A673 (cell line): ENCODE measurements at regions of chr2 and their contacts with region 1.

Region 1: DNA sequence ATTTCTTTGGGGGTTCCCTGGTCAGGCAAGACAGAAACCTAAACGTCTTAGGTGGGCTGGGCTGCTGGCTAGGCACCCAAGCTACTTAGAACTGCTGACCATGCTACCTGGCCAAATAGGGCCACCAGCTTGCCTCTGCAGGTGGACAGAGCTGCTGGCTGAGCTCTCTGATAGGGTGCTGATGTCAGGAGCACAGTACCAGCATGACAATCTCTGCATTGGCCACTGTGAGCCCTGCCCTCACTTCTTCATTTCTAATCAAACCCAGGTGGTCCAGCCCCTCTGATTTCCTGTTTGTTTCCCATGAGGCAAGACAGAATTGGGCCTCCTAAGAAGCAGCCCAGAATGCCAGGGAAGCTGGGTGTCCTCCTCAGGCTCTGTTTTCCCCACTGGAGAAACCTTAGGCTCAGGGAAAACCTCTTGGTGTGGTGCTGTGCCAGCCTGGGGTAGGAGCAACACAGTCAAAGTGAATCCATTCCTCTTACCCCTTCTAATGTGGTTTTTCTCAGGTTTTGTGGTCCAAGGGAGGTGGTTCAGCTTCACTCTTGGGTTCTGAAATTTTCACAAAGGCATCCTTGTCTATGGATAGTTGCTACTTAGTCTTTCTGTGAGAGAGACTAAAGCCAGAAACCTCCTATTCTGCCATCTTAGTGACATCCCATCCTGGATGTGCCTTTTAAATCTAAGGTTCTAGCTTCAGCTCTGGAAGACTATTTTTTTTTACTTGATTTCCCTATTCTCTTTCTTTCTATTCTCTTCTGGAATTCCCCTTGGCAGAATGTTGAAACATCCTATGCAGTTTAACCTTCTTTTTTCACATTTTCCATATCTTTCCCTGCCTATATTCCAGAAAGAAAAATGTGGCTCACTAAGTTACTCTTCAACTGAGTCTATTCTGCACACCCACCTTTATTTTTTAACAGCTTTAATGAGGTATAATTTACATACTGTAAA is 15.2 kb downstream of the SP100 start:
- DNase-seq: no peak
- H3K4me3 ChIP-seq: no peak overlapping the region
- H3K27ac ChIP-seq: no peak overlapping the region
- H3K4me1 ChIP-seq: no peaks in the 10 kb centered on the region
- H3K27me3 ChIP-seq: no peaks in the 10 kb centered on the region
- CTCF ChIP-seq: no peak

Region 2: GRCh38 chr2:229642371-229642770 is 788.9 kb before region 1 on chr2:
- CTCF ChIA-PET with region 1: no interaction called
- POLR2A ChIA-PET with region 1: interaction called, 15 read pairs
- intact Hi-C with region 1: no loop called
- DNase-seq: no peak
- H3K4me3 ChIP-seq: no peak overlapping the region
- H3K27ac ChIP-seq: no peak overlapping the region
- H3K4me1 ChIP-seq: no peaks in the 10 kb centered on the region
- H3K27me3 ChIP-seq: no peaks in the 10 kb centered on the region
- CTCF ChIP-seq: no peak

Region 3: DNA sequence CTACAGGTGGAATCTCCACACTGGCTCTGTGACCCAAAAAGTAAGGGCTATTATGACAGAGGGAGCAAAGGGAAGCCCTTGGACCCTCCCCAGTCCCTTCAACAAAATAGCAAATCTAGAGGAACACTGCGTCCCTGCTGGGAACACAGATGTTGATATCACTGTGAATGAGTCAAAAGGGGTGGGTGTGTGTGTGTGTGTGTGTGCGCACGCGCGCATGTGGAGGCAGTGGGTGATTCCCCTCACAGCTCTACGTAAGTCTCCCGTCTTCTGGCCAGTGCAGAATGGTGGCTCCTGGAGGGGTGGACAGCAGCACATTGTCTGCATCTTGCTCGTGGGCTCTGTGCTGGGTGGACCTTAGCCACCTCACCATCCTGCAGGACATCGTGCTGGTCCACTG is 598.3 kb after region 1 on chr2:
- CTCF ChIA-PET with region 1: no interaction called
- POLR2A ChIA-PET with region 1: no interaction called
- intact Hi-C with region 1: no loop called
- DNase-seq: no peak
- H3K4me3 ChIP-seq: no peak overlapping the region
- H3K27ac ChIP-seq: no peak overlapping the region
- H3K4me1 ChIP-seq: no peaks in the 10 kb centered on the region
- H3K27me3 ChIP-seq: peaks cover 17% of the 10 kb centered on the region
- CTCF ChIP-seq: no peak

Region 4: GRCh38 chr2:232008907-232009638 is 1577.8 kb after region 1 on chr2:
- CTCF ChIA-PET with region 1: no interaction called
- POLR2A ChIA-PET with region 1: interaction called, 14 read pairs
- intact Hi-C with region 1: no loop called
- DNase-seq: no peak
- H3K4me3 ChIP-seq: no peak overlapping the region
- H3K27ac ChIP-seq: no peak overlapping the region
- H3K4me1 ChIP-seq: no peaks in the 10 kb centered on the region
- H3K27me3 ChIP-seq: no peaks in the 10 kb centered on the region
- CTCF ChIP-seq: no peak